ENCODE measurements at regions of chr5 and their contacts with region 1.

Region 1: DNA sequence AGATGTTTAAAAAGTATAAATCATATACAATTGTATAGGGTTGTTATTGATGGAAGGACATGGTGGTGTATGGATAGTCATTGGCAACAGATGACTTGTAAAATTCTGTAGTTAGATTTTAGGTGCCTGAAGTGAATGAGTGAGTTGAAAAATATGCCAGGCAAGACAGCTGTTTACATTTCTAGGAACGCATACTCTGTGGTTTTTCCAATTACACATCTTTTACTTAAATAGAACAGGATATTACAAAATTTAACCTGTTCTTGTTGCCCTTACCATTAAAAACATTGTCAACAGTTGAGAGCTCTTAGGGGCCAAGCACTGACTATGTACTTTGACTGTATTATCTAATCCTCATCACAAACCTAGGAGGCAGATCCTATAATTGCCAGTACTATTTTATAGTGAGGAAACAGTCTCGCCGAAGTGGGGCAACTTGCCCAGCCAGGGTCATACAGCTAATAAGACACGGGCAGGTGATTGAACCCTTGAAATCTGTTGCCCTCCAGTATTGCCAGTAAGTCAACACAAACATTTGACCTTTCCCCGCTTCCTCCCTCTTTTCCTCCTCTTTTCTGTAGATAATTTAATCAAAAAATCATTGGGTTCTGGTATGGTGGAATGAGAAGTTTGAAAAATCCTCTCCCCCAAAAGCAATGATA is 88.6 kb downstream of the MACROH2A1 start:
- DNase-seq: peak; percentile 76
- ATAC-seq: peak; percentile 57
- H3K4me3 ChIP-seq: peak overlapping the region; percentile 9; the same call in 1 of the 2 replicates
- H3K27ac ChIP-seq: peak overlapping the region; percentile 93
- H3K4me1 ChIP-seq: peaks cover 35% of the 10 kb centered on the region
- H3K27me3 ChIP-seq: no peaks in the 10 kb centered on the region
- CTCF ChIP-seq: no peak

Region 2: GRCh38 chr5:135324897-135325650 is 14.6 kb after region 1 on chr5:
- CTCF ChIA-PET with region 1: no interaction called
- POLR2A ChIA-PET with region 1: no interaction called
- intact Hi-C with region 1: loop called (anchors 2 kb)
- DNase-seq: peak; percentile 60
- ATAC-seq: 0 out of 2 replicates have a peak, but pooled peaks have one; percentile 8
- H3K4me3 ChIP-seq: no peak overlapping the region
- H3K27ac ChIP-seq: no peak overlapping the region
- H3K4me1 ChIP-seq: peaks cover 22% of the 10 kb centered on the region
- H3K27me3 ChIP-seq: no peaks in the 10 kb centered on the region
- CTCF ChIP-seq: no peak